CD8-positive, alpha-beta T cell (primary cell): ENCODE measurements at regions of chr5 and their contacts with region 1.

Region 1: GRCh38 chr5:83645936-83646335 is 74.7 kb downstream of the HAPLN1 start:
- DNase-seq: no peak
- ATAC-seq: no peak
- H3K4me3 ChIP-seq: no peak overlapping the region
- H3K4me3 Mint-ChIP-seq: no peak overlapping the region
- H3K27ac ChIP-seq: no peak overlapping the region
- H3K27ac Mint-ChIP-seq: no peak overlapping the region
- H3K4me1 ChIP-seq: no peaks in the 10 kb centered on the region
- H3K4me1 Mint-ChIP-seq: no peaks in the 10 kb centered on the region
- H3K27me3 ChIP-seq: no peaks in the 10 kb centered on the region
- H3K27me3 Mint-ChIP-seq: peaks cover 4% of the 10 kb centered on the region
- CTCF ChIP-seq: no peak

Region 2: DNA sequence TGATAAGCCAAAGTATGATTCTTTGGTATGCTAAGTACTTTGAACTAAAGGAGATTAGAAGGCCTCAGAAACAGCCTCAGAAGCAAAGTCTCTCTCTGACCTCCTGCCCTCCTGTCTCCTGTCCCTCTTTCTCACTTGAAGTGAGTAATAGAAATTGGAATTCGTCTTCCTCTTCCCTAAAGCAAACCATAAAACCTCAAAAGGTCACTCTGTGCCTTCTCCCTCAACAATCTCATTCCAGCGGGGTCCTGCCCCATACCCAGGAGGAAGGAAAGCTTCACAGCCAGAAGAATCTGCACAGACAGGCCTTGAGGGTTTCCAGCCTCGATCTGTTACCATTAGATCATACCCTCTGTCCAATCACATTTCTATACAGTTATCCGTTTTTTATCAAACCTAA is 13.1 kb before region 1 on chr5:
- CTCF ChIA-PET with region 1: no interaction called
- POLR2A ChIA-PET with region 1: no interaction called
- intact Hi-C with region 1: no loop called
- DNase-seq: no peak
- ATAC-seq: no peak
- H3K4me3 ChIP-seq: no peak overlapping the region
- H3K4me3 Mint-ChIP-seq: no peak overlapping the region
- H3K27ac ChIP-seq: no peak overlapping the region
- H3K27ac Mint-ChIP-seq: no peak overlapping the region
- H3K4me1 ChIP-seq: no peaks in the 10 kb centered on the region
- H3K4me1 Mint-ChIP-seq: no peaks in the 10 kb centered on the region
- H3K27me3 ChIP-seq: no peaks in the 10 kb centered on the region
- H3K27me3 Mint-ChIP-seq: no peaks in the 10 kb centered on the region
- CTCF ChIP-seq: no peak

Region 3: GRCh38 chr5:85159395-85159794 is 1513.5 kb after region 1 on chr5:
- CTCF ChIA-PET with region 1: no interaction called
- POLR2A ChIA-PET with region 1: no interaction called
- intact Hi-C with region 1: loop called in 1 of 2 experiments (anchors 5 kb)
- DNase-seq: no peak
- ATAC-seq: no peak
- H3K4me3 ChIP-seq: no peak overlapping the region
- H3K4me3 Mint-ChIP-seq: no peak overlapping the region
- H3K27ac ChIP-seq: no peak overlapping the region
- H3K27ac Mint-ChIP-seq: no peak overlapping the region
- H3K4me1 ChIP-seq: no peaks in the 10 kb centered on the region
- H3K4me1 Mint-ChIP-seq: no peaks in the 10 kb centered on the region
- H3K27me3 ChIP-seq: no peaks in the 10 kb centered on the region
- H3K27me3 Mint-ChIP-seq: no peaks in the 10 kb centered on the region
- CTCF ChIP-seq: no peak